ENCODE measurements at regions of chr11 and their contacts with region 1.

Region 1: DNA sequence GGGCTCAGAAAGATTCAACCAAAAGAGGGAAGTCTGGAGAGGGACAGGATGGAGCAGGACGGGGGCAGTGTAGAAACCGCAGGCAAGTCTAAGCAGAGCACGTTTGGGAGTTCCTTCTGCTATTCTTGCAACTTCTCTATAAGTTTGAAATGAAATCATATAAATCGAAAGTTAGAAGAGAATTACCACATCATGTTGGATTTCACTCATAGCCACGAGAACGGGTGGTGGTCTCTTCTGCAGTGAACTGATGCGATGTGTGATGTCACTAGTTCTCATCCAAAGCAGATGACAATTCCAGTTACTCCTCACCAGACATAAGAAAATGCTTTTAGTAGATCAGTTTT is 36.0 kb downstream of the KCNQ1 start:
- DNase-seq: peak; percentile 47
- ATAC-seq: peak; percentile 76
- H3K4me3 Mint-ChIP-seq: peak overlapping the region; percentile 53
- H3K27ac Mint-ChIP-seq: peak overlapping the region; percentile 95
- H3K4me1 Mint-ChIP-seq: peaks cover 26% of the 10 kb centered on the region
- H3K27me3 Mint-ChIP-seq: no peaks in the 10 kb centered on the region

Region 2: GRCh38 chr11:2466869-2467698 is 13.8 kb before region 1 on chr11:
- CTCF ChIA-PET with region 1: no interaction called
- POLR2A ChIA-PET with region 1: no interaction called
- intact Hi-C with region 1: loop called in 1 of 2 experiments (anchors 1 kb)
- DNase-seq: peak; percentile 75
- ATAC-seq: peak; percentile 99
- H3K4me3 Mint-ChIP-seq: no peak overlapping the region
- H3K27ac Mint-ChIP-seq: peak overlapping the region; percentile 47
- H3K4me1 Mint-ChIP-seq: peaks cover 48% of the 10 kb centered on the region
- H3K27me3 Mint-ChIP-seq: no peaks in the 10 kb centered on the region

Measured in activated CD4-positive, alpha-beta T cell treated with anti-CD3 and anti-CD28 coated beads for 36 hours (primary cell).